Panc1 (cell line): ENCODE measurements at regions of chr9 and their contacts with region 1.

Region 1: DNA sequence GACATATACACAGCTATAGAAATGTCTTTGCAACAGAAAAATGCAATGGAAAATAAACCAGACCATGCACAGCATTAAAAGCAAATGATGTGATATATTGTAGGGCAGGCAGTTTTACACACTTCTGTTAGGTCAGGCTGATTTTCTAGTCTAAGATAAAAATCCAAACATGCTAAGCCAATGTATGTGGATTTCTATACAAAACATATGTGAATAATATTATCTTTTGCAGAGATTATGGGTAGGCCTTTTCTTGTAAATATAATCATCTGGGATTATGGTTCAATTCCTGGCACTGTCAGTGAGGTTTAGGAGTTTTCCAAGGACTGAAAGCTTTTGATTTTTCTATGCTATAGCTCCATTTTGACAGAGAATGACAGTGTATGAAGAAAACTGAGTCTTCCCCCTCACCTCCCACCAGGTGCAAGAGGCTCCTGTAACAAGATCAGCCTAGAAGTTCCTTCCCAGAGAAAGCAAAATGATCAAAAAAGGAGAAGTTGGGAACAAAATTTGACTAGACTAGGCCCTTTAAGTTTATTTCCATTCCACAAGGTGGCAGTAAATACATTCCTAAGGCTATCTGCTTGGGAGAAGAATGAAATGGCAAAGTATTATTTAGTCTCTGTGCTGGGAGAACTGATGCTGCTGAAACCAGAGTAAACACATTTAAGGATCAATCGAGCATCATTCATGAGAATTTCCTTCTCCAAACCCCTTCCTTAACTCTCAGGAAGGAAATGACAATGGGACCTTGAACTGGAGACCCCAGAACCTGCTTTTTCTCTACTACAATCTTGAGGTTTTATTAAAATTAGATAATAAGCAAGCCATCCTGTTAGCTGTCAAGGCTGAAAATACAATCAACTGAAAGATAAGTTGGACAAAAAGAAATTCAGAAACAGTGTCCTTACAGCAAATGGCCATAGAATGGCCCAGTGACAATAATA is 133.0 kb upstream of the TUT7 start:
- DNase-seq: peak; percentile 4
- ATAC-seq: no peak
- H3K4me3 ChIP-seq: no peak overlapping the region
- H3K27ac ChIP-seq: no peak overlapping the region
- H3K4me1 ChIP-seq: no peaks in the 10 kb centered on the region
- H3K27me3 ChIP-seq: no peaks in the 10 kb centered on the region
- CTCF ChIP-seq: peak; percentile 50; the same call in 1 of the 2 replicates

Region 2: DNA sequence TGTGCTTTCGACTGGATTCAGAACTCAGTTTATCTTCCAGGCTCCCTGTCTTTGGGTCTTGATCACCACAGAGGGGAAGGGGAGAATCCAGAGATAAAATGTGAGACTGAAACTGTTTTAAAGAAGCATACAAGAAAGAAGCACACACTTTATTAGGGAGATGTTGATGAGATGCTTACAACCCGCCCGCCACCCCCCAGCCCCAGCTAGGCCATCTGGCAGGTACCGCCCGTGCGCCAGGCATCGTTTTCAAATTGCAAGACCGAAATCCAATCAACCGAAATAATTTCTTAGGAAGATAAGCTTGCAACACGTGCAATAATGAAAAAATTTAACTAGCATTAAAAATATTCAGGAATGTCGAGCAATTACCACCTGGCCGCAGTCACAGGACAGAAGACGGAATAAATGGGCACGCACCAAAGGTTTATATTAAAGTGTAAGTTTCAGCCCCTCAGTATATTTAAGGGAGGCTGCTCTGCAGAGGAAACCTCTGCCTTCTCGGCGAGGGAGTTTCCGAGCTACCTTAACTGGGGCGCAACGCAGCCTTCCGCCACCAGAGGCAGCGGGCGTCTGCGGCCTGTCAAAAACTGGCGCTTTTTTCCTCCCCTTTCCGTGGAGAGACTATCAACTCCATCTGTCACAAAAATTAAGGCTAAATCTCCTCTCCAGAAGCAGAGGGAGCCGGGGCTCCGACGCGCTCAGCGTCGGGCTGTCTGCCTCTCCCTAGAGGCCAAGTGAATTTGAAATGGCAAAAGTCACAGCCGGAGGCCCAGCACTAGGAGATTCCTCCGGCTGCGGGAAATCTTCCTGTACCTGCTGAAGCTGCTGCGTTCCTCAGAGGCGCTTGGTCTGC is 461.1 kb after region 1 on chr9:
- CTCF ChIA-PET with region 1: no interaction called
- POLR2A ChIA-PET with region 1: no interaction called
- in situ Hi-C with region 1: no loop called
- intact Hi-C with region 1: loop called (anchors 5 kb)
- DNase-seq: peak; percentile 28
- ATAC-seq: peak; percentile 70
- H3K4me3 ChIP-seq: peak overlapping the region; percentile 49 to 55
- H3K27ac ChIP-seq: no peak overlapping the region
- H3K4me1 ChIP-seq: no peaks in the 10 kb centered on the region
- H3K27me3 ChIP-seq: peaks cover 11% of the 10 kb centered on the region
- CTCF ChIP-seq: peak; percentile 79